Activated naive CD4-positive, alpha-beta T cell treated with anti-CD3 and anti-CD28 coated beads for 36 hours (primary cell): ENCODE measurements at regions of chr12 and their contacts with region 1.

Region 1: DNA sequence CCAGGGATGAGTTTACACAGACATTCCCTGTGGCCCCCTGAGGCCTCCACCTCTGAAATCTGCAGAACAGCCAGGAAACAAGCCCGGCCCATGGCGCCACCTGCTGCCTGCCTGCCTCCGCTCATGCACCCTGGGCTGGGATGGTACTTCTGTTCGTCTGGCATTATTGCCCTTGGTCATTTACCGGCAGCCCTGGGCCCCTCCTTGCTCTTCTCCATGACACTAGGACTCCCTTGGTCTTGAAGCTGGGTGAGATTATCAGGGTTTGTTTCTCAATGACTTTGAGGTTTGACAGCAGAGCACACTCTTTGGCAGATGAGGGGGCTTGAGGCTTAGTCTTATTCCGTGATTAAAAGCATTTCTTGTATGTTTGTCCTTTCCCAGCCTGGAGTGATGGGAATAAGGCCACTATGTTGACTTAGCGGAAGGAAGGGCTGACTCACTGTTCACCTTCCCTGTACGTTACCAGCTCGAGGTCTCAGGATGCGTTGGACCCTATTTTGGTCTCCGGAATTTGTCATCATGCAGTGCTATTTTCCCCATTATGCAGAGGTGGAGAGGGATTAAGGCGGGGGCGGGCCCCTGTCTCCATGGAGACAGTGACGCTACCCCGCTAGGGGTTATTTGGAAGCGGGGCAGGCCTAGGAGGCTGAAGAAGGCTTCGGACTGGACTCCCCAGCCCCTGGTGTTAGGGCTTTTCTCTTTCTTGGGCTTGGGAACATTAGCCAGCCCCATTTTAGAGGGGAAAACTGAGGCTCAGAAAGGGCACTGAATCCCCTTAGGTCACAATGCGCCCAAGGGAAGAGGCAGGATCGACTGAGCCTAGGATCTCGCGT is 706 bp upstream of the PEX5 start:
- DNase-seq: peak; percentile 87
- H3K4me3 Mint-ChIP-seq: peak overlapping the region; percentile 88
- H3K27ac Mint-ChIP-seq: peak overlapping the region; percentile 95
- H3K4me1 Mint-ChIP-seq: peaks cover 36% of the 10 kb centered on the region
- H3K27me3 Mint-ChIP-seq: no peaks in the 10 kb centered on the region

Region 2: GRCh38 chr12:6890789-6891645 is 297.8 kb before region 1 on chr12:
- CTCF ChIA-PET with region 1: no interaction called
- intact Hi-C with region 1: loop called (anchors 1 kb)
- DNase-seq: peak; percentile 100
- H3K4me3 Mint-ChIP-seq: peak overlapping the region; percentile 90
- H3K27ac Mint-ChIP-seq: peak overlapping the region; percentile 98
- H3K4me1 Mint-ChIP-seq: peaks cover 16% of the 10 kb centered on the region
- H3K27me3 Mint-ChIP-seq: no peaks in the 10 kb centered on the region

Region 3: DNA sequence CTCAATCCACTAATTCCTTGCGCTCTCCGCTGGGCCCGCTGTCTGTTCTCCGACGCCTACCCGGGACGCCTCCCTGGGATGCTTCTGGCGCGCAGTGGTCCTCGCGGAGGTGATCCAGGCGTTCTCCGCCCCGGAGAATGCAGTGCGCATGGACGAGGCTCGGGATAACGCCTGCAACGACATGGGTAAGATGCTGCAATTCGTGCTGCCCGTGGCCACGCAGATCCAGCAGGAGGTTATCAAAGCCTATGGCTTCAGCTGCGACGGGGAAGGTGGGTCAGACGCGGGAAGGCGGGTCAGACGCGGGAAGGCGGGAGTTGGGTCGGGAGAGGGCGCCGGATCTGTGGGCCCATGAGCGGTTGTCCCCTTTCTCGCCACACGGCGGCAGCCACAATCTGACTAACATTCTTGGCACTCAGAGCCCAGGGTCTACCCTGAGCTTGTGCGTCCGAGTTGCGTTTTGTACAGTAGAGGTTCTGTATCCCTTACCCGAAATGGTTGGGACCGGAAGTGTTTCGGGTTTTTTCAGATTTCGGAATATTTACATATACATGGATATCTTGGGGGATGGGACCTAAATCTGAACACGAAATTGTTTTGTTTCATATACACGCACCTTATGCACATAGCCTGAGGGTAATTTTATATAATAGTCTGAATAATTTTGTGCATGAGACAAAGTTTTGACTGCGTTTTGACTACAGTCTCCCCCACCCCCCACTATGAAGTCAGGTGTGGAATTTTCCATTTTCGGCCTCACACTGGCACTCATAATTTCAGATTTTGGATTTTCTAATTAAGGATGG is 244.2 kb before region 1 on chr12:
- CTCF ChIA-PET with region 1: no interaction called
- intact Hi-C with region 1: loop called (anchors 5 kb)
- DNase-seq: peak; percentile 96
- H3K4me3 Mint-ChIP-seq: peak overlapping the region; percentile 94
- H3K27ac Mint-ChIP-seq: peak overlapping the region; percentile 93
- H3K4me1 Mint-ChIP-seq: peaks cover 49% of the 10 kb centered on the region
- H3K27me3 Mint-ChIP-seq: no peaks in the 10 kb centered on the region

Region 4: GRCh38 chr12:7108796-7109571 is 79.8 kb before region 1 on chr12 and contains the start of gene C1RL:
- CTCF ChIA-PET with region 1: interaction called, 3 read pairs
- intact Hi-C with region 1: loop called (anchors 1 kb)
- DNase-seq: peak; percentile 91
- H3K4me3 Mint-ChIP-seq: peak within 1 kb of the TSS; percentile 95
- H3K27ac Mint-ChIP-seq: peak within 1 kb of the TSS; percentile 97
- H3K4me1 Mint-ChIP-seq: peaks cover 29% of the 10 kb centered on the region
- H3K27me3 Mint-ChIP-seq: no peaks in the 10 kb centered on the region
- total RNA-seq, gene C1RL: 10.3 to 11.5 TPM

Region 5: DNA sequence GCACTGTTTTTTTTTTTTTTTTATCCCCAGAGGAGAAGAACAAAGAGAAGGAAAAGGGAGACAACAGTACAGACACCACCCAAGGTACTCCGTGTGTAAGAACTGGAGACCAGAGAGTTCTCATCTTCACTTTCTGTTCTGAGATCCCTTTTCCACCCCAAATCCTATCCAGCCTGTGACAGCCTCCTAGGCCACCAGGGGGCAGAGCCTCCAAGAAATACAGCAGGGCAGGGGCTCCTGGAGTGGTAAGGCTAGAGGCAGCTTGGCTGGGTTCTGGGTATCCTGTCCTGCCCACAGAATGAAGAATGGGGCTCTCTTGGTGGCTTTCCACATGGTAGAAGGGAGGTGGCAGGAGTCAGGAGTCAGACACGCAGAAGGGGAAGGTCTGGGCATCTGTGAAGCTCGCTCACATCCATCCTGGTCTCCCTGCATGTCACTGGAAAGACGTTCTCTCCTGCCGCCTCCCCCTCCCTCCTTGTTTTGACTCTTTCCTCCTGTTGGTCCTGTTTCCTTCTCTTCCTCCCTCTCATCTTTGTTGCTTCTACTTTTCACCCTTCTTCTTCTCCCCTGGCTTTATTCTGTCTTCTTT is 46.6 kb before region 1 on chr12:
- CTCF ChIA-PET with region 1: interaction called, 11 read pairs
- intact Hi-C with region 1: loop called (anchors 1 kb)
- DNase-seq: peak; percentile 74
- H3K4me3 Mint-ChIP-seq: no peak overlapping the region
- H3K27ac Mint-ChIP-seq: no peak overlapping the region
- H3K4me1 Mint-ChIP-seq: peaks cover 2% of the 10 kb centered on the region
- H3K27me3 Mint-ChIP-seq: no peaks in the 10 kb centered on the region

Region 6: DNA sequence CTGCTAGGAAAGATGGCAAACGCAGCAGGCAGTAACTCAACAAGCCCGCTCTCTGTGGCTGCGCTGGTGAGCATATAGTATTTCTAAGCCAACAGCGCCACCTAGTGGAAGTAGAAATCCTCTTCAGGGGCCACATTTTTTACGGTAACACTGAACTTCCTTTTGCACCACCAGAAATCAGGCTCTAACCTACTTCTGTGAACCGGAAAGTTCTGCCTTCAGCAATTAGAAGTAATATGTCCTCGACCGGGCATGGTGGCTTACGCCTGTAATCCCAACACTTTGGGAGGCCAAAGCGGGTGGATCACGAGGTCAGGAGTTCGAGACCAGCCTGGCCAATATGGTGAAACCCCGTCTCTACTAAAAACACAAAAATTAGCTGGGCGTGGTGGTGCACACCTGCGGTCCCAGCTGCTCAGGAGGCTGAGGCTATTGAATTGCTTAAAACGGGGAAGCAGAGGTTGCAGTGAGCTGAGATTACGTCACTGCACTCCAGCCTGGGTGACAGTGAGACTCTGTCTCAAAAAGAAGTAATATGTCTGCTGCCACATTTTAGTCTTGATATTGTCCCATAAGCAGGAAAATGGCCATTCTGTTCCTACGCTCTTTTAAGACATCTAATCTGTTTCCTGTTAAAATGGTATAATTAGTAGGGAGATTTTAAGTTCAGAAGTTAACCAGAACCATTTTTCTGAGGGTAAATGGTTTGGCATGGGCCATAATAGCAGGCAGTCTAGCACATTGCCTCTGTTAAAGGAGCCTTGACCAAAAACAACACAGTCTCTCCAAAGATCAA is 450.2 kb after region 1 on chr12:
- CTCF ChIA-PET with region 1: interaction called, 3 read pairs
- intact Hi-C with region 1: loop called (anchors 1 kb)
- DNase-seq: peak; percentile 89
- H3K4me3 Mint-ChIP-seq: peak overlapping the region; percentile 65
- H3K27ac Mint-ChIP-seq: peak overlapping the region; percentile 69
- H3K4me1 Mint-ChIP-seq: peaks cover 20% of the 10 kb centered on the region
- H3K27me3 Mint-ChIP-seq: peaks cover 2% of the 10 kb centered on the region